Stomach (tissue), 19 donors: ENCODE measurements at regions of chr9 and their contacts with region 1.

Region 1: DNA sequence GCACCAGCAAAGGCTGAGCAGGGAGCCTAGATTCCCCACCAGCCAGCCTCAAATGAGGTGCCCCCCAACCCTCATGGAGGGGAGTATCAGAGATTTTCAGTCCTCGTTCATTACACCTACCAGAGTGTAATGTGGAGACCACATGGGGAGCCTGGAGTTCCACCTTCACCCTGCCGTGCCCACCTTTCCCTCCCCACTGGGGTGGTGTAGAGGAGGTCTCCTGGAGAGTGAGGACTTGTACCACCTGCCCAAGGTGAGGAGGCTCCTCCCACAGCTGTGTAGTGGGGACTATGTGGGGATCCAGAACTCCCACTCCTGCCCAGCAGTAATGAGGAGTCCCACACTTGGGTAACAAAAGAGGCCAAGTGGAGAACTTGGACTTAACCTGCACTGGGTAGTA is 221.8 kb downstream of the SAXO1 start:
- DNase-seq: no peak
- H3K4me3 ChIP-seq: no peak overlapping the region
- H3K27ac ChIP-seq: no peak overlapping the region
- H3K4me1 ChIP-seq: peaks cover 0 to 7% (median 1%) of the 10 kb centered on the region in 4 donors
- H3K27me3 ChIP-seq: no peaks in the 10 kb centered on the region
- CTCF ChIP-seq: no peak
- EP300 ChIP-seq: no peak
- POLR2A ChIP-seq: no peak

Region 2: GRCh38 chr9:18255158-18255629 is 556.0 kb before region 1 on chr9:
- intact Hi-C with region 1: loop called (anchors 10 kb)
- DNase-seq: peak; percentile 83 to 94
- H3K4me3 ChIP-seq: no peak overlapping the region
- H3K27ac ChIP-seq: no peak overlapping the region
- H3K4me1 ChIP-seq: peaks cover 0 to 15% (median 0%) of the 10 kb centered on the region in 4 donors
- H3K27me3 ChIP-seq: no peaks in the 10 kb centered on the region
- CTCF ChIP-seq: peak in 6 of 7 experiments; percentile 35 to 97 (median 94)
- EP300 ChIP-seq: no peak
- POLR2A ChIP-seq: no peak

Region 3: GRCh38 chr9:18768951-18769622 is 42.1 kb before region 1 on chr9:
- intact Hi-C with region 1: no loop called
- DNase-seq: no peak
- H3K4me3 ChIP-seq: no peak overlapping the region
- H3K27ac ChIP-seq: no peak overlapping the region
- H3K4me1 ChIP-seq: peaks cover 0 to 5% (median 0%) of the 10 kb centered on the region in 4 donors
- H3K27me3 ChIP-seq: no peaks in the 10 kb centered on the region
- CTCF ChIP-seq: no peak
- EP300 ChIP-seq: no peak
- POLR2A ChIP-seq: no peak